AG04450 (cell line): ENCODE measurements at regions of chr4 and their contacts with region 1.

Region 1: DNA sequence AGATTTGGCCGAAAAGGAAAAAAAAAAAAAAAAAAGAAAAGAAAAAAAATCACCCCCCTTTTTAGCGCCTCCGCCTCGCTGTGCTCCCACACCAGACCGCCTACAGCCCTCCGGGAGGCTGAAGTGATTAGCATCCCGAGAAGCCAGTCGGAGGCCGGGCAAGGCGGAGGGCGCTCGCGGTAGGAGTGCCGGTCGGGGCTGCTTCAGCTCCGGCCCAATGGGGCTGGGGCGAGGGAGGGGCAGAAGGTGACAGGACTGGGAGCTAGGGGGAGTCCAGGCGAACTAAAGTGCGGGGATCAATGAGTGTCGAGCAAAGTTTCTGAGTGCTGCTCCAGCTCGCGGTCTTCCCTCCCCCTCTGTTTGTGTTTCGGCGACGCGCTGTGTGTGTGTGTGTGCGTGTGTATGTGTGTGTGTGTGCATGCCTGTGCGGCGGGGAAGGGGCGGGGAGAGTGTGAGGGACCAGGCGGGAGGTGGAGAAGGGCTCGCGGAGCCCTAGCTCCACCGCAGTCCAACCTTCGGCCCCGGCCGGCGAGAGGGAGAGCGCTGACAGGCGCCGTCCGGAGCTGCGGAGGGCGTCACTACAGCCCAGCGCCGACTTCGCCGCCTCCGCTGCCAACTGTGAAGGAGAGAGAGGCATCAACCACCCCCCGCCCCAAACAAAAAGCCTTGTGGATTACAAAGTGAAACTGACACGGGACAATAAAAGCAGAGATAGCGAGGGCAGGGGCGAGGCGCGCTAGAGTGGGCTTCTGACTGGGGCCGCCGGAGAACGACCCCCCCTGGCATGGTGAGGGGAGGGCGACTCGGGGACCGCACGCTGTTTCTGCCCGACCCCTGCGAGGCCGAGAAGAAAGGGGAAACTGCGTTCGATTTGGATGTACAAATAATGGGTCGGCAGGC is at the start of gene FAT4:
- DNase-seq: peak; percentile 97
- H3K4me3 ChIP-seq: peak within 1 kb of the TSS; percentile 93
- H3K27ac ChIP-seq: peak within 1 kb of the TSS; percentile 83
- H3K27me3 ChIP-seq: no peaks in the 10 kb centered on the region
- CTCF ChIP-seq: peak; percentile 19; the same call in 1 of the 2 replicates
- polyA plus RNA-seq, gene FAT4: 15.4 and 18.0 TPM in 2 replicates

Region 2: DNA sequence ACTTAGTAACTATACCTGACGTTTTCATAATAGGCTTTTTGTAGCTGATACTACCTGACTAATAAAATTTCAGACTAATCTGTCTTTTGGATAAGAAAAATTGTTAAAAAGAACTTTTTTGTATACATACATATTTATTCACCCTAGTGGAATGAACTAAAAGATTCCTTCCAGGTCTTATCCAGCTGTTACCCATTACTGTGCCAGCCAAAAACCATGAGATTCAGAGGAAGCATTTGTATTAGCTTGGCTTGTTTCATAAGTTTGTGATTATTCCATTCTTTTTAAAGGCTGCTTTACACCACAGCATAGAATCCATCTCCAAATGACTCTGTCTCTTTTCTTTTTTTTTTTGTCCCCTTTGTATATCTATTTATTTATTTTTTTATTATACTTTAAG is 149.2 kb after region 1 on chr4:
- CTCF ChIA-PET with region 1: no interaction called
- POLR2A ChIA-PET with region 1: no interaction called
- DNase-seq: no peak
- H3K4me3 ChIP-seq: no peak overlapping the region
- H3K27ac ChIP-seq: no peak overlapping the region
- H3K27me3 ChIP-seq: no peaks in the 10 kb centered on the region
- CTCF ChIP-seq: no peak

Region 3: DNA sequence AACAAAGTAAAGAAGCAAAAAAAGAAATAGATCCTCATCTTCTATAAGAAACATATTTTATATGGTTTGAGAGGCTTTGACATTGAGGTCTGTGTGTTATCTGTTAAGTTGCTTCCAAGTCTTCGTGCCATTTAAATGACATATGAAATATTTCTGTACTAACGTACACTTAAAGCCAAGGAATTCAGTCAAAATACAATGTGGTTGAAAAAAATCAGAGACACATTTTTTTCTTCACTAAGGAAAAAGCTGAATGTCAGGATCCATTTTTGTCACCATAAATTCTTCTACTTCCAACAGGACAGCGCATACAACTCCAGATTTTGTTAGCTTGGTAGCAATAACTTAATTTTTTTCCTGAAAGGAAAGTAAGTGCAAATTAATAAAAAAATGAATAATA is 168.4 kb after region 1 on chr4:
- CTCF ChIA-PET with region 1: no interaction called
- POLR2A ChIA-PET with region 1: no interaction called
- DNase-seq: no peak
- H3K4me3 ChIP-seq: no peak overlapping the region
- H3K27ac ChIP-seq: no peak overlapping the region
- H3K27me3 ChIP-seq: no peaks in the 10 kb centered on the region
- CTCF ChIP-seq: no peak

Region 4: DNA sequence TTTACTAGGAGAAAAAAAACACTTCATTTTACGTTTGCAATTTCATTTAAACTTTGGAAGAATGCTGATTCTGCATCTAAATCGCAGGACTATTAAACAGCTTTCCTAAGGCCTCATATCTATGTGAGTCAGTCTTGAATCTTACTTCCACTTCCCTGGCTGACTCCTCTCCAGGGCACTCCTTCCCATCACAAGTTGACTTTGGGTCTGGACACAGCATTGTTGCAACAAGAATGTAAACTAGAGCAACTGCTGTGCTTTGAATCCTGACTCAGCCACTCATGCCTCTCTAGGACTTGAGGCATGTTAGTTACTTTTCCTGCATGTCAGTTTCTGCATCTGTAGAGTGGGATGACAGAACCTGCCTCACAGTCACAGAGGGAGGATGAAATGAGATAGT is 413.6 kb after region 1 on chr4:
- CTCF ChIA-PET with region 1: interaction called, 12 read pairs
- POLR2A ChIA-PET with region 1: interaction called, 9 read pairs
- DNase-seq: peak; percentile 89
- H3K4me3 ChIP-seq: peak overlapping the region; percentile 14; the same call in 1 of the 2 replicates
- H3K27ac ChIP-seq: peak overlapping the region; percentile 52
- H3K27me3 ChIP-seq: no peaks in the 10 kb centered on the region
- CTCF ChIP-seq: no peak

Region 5: GRCh38 chr4:125750828-125751466 is 436.0 kb after region 1 on chr4:
- CTCF ChIA-PET with region 1: interaction called, 14 read pairs
- POLR2A ChIA-PET with region 1: interaction called, 6 read pairs
- DNase-seq: no peak
- H3K4me3 ChIP-seq: no peak overlapping the region
- H3K27ac ChIP-seq: no peak overlapping the region
- H3K27me3 ChIP-seq: no peaks in the 10 kb centered on the region
- CTCF ChIP-seq: peak; percentile 43